ENCODE measurements at regions of chr1 and their contacts with region 1.

Region 1: DNA sequence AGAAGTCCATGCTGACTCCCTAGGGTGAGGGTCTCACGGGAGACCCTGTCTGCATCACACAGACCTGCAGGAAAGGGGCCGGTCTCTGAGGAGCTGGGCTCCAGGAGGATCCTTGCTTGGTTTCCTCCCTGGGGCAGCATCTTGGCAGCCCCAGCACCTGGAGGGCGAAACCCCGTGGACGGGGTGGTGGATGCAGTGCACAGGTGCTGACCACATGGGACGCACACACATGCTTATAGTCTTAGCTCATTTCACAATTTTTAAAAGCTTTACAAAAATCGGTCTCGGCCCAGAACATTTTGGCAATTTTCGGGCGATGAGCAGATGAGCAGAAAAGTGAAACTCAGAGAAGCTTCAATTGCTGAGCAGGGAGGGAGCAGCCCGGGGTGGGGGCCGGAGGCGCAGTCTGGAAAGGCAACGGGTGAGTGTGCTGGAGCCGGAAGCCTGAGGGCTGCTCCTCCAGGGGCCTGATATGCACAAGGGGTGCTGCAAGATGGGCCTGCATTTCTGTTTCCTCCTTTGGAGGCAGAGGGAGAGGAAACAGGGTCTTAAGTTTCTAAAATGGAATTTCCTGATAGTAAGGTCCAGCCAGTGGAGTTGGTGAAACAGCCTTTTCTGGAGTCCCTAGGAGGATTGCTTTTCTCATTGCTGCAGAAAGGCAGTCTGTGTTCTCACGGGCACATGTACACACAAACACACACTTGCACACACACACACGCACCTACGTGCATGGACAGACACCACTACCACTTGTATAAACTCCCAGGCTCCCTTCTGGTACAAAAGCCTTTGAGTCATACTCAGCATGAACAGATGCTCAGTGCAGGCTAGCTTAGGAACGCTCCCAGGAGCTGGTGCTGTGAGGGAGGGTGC is 60.6 kb downstream of the SCCPDH start:
- DNase-seq: no peak
- H3K4me3 ChIP-seq: no peak overlapping the region
- H3K27ac ChIP-seq: no peak overlapping the region
- H3K4me1 ChIP-seq: peaks cover 0 to 11% (median 6%) of the 10 kb centered on the region in 4 donors
- H3K27me3 ChIP-seq: no peaks in the 10 kb centered on the region
- CTCF ChIP-seq: no peak
- EP300 ChIP-seq: no peak
- POLR2A ChIP-seq: no peak

Region 2: GRCh38 chr1:247605286-247605685 is 820.4 kb after region 1 on chr1 and contains the start of gene OR2G3:
- in situ Hi-C with region 1: no loop called
- intact Hi-C with region 1: loop called (anchors 5 kb)
- DNase-seq: no peak
- H3K4me3 ChIP-seq: no peak within 1 kb of the TSS
- H3K27ac ChIP-seq: no peak within 1 kb of the TSS
- H3K4me1 ChIP-seq: no peaks in the 10 kb centered on the region
- H3K27me3 ChIP-seq: no peaks in the 10 kb centered on the region
- CTCF ChIP-seq: no peak
- EP300 ChIP-seq: no peak
- POLR2A ChIP-seq: no peak
- total RNA-seq, gene OR2G3: not detected